GM13976 (cell line): ENCODE measurements at regions of chr7 and their contacts with region 1.

Region 1: GRCh38 chr7:41367967-41368882 is 334.7 kb downstream of the INHBA start:
- DNase-seq: no peak
- CTCF ChIP-seq: no peak

Region 2: GRCh38 chr7:41459623-41460261 is 91.5 kb after region 1 on chr7:
- in situ Hi-C with region 1: loop called (anchors 25 kb)
- DNase-seq: no peak
- CTCF ChIP-seq: no peak

Region 3: DNA sequence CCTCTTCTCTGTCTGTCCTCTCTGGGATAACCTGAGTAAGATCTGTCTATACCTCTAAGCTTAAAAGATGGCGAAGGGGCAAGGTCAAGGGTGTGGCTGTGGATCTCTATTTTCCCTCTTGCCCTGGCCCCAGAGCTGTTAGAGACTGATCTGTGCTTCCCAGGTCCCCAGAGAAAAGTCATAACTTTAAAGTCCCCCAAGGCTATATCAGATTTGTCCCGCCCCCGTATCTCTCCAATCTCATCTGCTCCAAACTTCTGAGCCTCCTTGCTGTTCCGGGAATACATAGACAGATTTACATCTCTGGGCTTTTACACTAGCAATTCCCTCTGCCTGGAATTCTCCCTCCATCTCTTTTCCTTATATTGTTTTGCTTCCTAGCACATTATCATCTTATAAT is 296.2 kb after region 1 on chr7:
- in situ Hi-C with region 1: no loop called
- DNase-seq: no peak
- CTCF ChIP-seq: no peak